Right ventricle myocardium inferior (tissue), 1 donor: ENCODE measurements at regions of chr11 and their contacts with region 1.

Region 1: GRCh38 chr11:78416305-78417178 is 1.1 kb downstream of the GAB2 start:
- DNase-seq: peak; percentile 93
- ATAC-seq: peak; percentile 79

Region 2: GRCh38 chr11:77411717-77412441 is 1004.7 kb before region 1 on chr11:
- intact Hi-C with region 1: no loop called
- DNase-seq: peak; percentile 96
- ATAC-seq: peak; percentile 95

Region 3: DNA sequence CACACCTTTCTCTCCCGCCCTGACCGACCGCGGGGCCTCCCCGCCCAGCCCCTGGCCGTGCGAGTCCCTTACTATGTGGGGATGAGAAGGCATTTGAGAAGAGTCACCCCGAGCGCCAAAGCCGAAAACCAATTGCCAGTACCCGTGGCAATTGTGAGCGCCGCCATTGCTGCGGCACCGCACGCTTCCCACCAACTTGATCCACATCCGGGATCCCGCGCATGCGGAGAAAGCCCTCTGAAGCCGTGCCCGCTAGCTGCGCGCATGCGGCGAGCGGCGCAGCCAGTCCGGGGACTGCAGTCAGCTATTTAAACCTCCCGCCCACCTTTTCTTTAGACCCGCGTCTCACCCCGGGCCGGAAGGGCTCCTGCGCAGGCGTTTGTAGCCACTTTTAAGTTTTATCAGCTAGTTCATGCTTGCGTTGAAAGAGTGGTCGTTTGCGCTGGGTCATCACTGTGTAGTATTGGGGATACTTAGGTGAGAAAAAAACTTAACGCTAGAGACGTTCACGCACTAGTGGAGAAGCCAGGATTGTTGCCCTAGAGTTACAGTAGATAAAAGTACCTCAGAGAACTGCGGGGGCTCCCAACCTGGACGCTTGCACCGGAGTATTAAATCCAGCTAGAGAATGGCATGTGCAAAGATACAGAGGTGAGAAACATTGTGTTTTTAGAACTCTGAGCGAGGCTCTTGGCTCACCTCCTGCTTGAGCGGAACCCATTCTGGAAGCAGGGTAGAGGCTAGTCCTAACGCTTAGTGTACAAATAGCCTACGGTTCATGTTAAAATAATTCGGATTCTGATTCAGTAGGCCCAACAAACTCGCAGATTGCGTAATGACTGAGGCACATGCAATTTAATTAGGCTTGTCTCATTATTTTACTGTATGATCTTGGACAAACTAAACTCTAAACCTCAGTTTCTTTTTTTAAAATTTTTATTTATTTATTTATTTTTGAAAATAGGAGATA is 276.8 kb before region 1 on chr11 and contains the start of gene ALG8:
- intact Hi-C with region 1: loop called (anchors 5 kb)
- DNase-seq: peak; percentile 98
- ATAC-seq: peak; percentile 99
- total RNA-seq, gene ALG8: 16.7 TPM

Region 4: DNA sequence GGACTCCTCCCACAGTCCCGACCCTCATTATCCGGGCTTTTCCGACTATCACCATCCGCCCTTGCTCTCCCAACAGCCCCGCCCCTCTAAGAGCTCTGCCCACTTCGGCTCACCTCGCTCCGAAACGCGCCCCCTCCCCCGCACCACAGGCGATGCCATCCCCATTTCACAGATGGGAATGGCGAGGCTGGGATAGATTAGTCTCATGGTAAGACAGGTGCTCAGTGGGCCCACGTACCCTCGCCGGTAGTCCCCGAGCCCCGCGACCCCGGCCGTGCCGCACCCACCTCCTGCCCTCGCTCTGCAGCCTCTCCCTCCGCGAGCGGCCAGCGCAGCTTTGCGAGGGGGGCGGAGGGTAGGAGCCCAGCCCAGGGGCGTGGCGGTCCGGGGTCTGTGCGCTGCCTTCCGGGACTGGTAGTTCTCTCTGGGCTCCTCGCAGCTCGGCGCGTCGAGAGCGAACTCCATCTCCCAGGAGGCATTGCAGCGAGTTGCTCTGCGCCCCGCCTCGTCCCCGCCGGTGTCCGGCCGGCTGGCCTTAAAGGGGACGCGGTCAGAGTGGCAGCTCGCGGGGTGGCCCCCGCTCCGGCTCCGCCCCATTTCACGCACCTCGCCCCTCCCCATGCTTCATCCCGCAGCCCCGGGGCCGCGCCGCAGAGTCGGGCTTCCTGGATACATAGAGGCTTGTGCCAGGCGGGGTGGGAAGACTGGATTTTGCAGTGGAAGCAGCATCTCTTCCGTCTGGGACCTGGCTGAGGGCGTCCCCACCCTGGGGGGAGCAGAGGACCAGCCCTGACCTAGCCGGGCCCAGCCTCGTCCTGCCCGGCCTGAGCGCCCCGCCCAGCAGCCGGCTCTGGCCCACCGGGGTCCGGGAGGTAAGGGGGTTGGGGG is 228.0 kb before region 1 on chr11 and contains the starts of genes KCTD21 and USP35:
- intact Hi-C with region 1: no loop called
- DNase-seq: peak; percentile 99
- ATAC-seq: peak; percentile 98
- total RNA-seq, gene KCTD21: 10.6 TPM
- total RNA-seq, gene USP35: 6.2 TPM

Region 5: GRCh38 chr11:78228467-78228866 is 188.1 kb before region 1 on chr11:
- intact Hi-C with region 1: loop called (anchors 1 kb)
- DNase-seq: no peak
- ATAC-seq: peak; percentile 49

Region 6: GRCh38 chr11:78310500-78310909 is 106.0 kb before region 1 on chr11:
- intact Hi-C with region 1: loop called (anchors 5 kb)
- DNase-seq: peak; percentile 76
- ATAC-seq: peak; percentile 86

Region 7: DNA sequence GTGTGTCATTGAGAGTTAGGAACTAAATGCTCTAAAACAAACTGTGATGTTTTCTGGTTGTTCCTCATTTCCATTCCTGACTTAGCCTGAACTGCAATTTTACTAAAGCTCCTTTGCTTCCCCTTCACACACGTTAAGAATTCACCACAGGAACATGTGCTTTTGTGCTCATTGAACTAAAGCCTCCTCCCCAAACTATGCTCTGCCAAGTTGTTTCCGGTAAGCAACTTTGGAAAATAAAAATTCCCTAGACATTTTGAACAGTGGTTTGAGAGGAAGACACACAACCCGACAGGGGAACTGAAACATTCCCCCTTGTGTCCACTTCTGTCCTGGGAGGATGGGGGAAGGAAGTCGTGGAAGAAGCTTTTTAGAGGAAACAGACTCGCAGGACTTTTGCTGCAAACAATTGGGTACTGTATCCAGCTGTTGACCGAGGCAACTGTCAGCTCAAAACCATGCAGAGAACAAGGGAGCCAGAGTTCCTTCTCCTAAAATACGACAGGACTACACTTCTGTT is 65.8 kb before region 1 on chr11:
- intact Hi-C with region 1: loop called (anchors 5 kb)
- DNase-seq: no peak
- ATAC-seq: peak; percentile 65

Region 8: GRCh38 chr11:78438298-78438975 is 21.9 kb after region 1 on chr11:
- intact Hi-C with region 1: no loop called
- DNase-seq: no peak
- ATAC-seq: no peak

Region 9: DNA sequence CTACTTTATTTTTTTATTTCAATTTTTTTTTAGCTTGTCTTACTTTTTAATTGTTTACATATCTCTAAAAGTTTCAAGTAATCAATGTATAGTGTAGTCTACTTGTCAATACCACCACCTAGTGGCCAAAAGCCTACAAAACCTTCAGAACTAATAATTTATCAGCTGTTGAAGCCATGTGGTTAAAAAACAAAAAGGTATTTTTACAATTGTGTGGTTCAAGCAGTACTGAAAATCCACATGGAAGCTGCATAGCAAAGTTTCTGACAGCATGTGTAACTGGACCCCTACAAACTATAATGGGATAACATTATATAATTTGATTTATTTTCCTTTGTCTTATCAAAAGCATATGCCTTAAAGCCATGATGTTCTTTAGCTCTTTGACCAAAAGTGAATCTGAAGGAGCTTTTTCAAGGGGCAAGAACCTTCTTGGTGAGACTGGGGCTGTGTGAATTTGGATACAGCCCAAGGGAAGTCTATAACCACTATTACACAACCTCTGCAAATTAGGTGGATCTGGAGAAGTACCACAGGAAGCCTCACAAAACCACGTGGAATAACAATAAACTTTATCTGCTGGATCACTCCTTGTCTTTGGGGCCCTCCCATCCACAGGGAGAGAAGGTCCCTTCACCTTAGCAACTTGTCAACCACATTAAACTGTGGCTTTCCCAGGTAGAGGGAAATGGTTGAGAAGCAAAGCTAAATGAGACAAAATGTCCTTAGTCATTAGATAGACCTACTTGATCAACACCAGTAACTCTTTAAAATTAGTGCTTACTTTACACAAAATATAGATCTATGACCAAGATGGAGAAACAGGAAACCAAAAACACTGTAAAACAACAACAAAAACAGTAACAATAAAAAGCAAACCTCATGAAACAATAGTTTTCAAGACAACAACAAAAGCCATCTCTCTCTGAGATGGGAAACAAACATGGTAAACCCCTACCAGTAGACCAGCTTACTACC is 148.2 kb after region 1 on chr11:
- intact Hi-C with region 1: loop called (anchors 5 kb)
- DNase-seq: no peak
- ATAC-seq: no peak